HCT116 (cell line): ENCODE measurements at regions of chr2 and their contacts with region 1.

Region 1: DNA sequence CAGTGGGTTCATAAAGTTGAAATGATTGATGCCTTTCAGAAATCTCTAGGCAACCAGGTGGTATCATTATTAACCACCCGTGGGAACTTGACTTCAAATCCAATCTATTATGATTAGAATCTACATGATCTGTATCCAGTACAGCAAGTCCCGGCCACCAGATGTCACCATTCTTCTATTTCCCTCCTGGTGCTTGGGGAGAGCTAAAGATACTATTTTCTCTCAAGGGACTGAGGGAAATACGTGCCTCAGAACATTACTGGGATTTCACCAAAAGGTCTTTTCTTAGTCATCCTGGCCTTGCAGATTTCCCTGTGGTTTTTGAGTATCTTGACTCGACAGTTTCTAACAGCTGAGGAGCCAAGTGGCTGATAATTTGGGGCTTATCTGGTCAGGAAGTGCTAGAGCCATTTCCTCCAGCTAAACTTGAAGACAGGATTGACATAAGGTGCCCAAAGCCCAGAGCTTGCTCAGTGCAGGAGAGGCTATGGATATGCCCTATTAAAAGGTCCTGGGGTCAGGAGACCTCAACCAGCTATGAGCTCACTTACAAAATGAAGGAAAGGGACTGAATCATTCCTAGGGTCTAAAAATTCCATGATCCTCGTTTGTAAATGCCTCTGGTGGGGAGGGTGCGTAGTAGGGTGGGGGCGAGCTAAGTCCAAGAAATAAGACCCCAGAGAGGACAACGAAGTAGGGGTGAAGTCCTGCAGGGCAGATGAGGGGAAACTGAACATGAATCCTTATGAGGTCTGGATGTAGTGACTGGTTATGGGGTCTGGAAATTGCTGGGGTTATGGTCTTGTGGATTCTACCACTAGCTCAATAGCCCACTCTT is 135.4 kb upstream of the MGAT5 start:
- DNase-seq: peak; percentile 84
- ATAC-seq: peak; percentile 52
- H3K4me3 ChIP-seq: peak overlapping the region in 1 of 2 experiments; percentile 81; a peak in 1 of 4 replicates
- H3K27ac ChIP-seq: no peak overlapping the region
- H3K4me1 ChIP-seq: peaks cover 12 to 19% of the 10 kb centered on the region in 2 experiments; a peak in 3 of 4 replicates
- H3K27me3 ChIP-seq: no peaks in the 10 kb centered on the region
- CTCF ChIP-seq: peak; percentile 68 to 97 (median 80)
- POLR2A ChIP-seq: no peak
- RAD21 ChIP-seq: peak; percentile 98

Region 2: GRCh38 chr2:133886735-133887660 is 231.5 kb before region 1 on chr2:
- CTCF ChIA-PET with region 1: interaction called, 18 read pairs
- POLR2A ChIA-PET with region 1: no interaction called
- RAD21 ChIA-PET with region 1: interaction called, 3 to 4 read pairs
- intact Hi-C with region 1: loop called (anchors 2 kb)
- DNase-seq: peak; percentile 70
- ATAC-seq: peak; percentile 94
- H3K4me3 ChIP-seq: no peak overlapping the region
- H3K27ac ChIP-seq: no peak overlapping the region
- H3K4me1 ChIP-seq: no peaks in the 10 kb centered on the region
- H3K27me3 ChIP-seq: no peaks in the 10 kb centered on the region
- CTCF ChIP-seq: peak; percentile 61 to 76 (median 71)
- POLR2A ChIP-seq: no peak
- RAD21 ChIP-seq: peak; percentile 82

Region 3: GRCh38 chr2:134207564-134208209 is 89.2 kb after region 1 on chr2:
- CTCF ChIA-PET with region 1: interaction called, 43 read pairs
- POLR2A ChIA-PET with region 1: interaction called, 3 read pairs
- RAD21 ChIA-PET with region 1: interaction called, 10 to 23 read pairs
- intact Hi-C with region 1: loop called (anchors 5 kb)
- DNase-seq: peak; percentile 47
- ATAC-seq: peak; percentile 99
- H3K4me3 ChIP-seq: no peak overlapping the region
- H3K27ac ChIP-seq: no peak overlapping the region
- H3K4me1 ChIP-seq: no peaks in the 10 kb centered on the region
- H3K27me3 ChIP-seq: no peaks in the 10 kb centered on the region
- CTCF ChIP-seq: peak; percentile 78 to 87 (median 85)
- POLR2A ChIP-seq: no peak
- RAD21 ChIP-seq: peak; percentile 86

Region 4: GRCh38 chr2:134245340-134245984 is 127.0 kb after region 1 on chr2:
- CTCF ChIA-PET with region 1: interaction called, 27 read pairs
- POLR2A ChIA-PET with region 1: no interaction called
- RAD21 ChIA-PET with region 1: interaction called in 1 of 2 experiments, 6 read pairs
- intact Hi-C with region 1: loop called (anchors 1 kb)
- DNase-seq: peak; percentile 35
- ATAC-seq: peak; percentile 81
- H3K4me3 ChIP-seq: no peak overlapping the region
- H3K27ac ChIP-seq: no peak overlapping the region
- H3K4me1 ChIP-seq: no peaks in the 10 kb centered on the region
- H3K27me3 ChIP-seq: no peaks in the 10 kb centered on the region
- CTCF ChIP-seq: peak; percentile 62 to 87 (median 83)
- POLR2A ChIP-seq: no peak
- RAD21 ChIP-seq: peak; percentile 71

Region 5: DNA sequence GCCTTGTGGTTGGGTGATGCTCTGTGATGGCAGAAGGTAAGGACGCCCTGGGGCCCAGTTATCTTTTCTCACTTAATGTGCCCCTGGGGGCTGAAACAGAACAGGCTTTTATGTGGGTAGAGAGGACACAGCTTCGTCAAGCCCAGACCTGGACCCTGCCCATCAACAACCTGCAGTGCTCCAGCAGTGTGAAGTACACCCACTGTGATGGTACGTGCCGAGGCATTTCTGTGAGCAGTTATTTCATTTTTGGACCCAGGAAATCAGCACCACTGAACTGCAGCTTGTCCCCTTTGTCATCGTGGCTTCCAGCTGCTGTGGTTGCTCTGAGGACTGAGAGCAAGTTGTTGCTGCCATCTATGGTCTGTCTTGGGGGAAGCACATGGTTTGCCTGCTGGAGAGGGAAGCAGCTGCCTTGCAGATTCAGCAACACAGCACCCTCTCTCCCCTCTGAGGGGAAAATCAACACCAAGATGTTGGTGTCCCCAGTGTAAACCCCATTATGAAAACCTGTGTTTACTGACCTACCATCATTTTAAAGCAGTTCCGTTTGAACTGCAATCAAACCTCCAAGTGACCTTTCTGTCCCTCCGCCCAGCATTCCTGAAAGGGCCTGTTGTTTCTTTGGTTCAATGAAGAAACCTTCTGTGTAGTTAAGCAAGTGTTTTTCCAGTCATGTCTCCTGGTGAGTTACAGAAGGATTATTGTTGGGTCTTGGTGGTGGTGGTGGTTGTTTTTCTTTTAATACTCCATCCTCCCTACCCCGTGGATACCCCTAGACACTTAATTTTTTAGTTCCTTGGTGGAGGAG is 293.5 kb after region 1 on chr2:
- CTCF ChIA-PET with region 1: interaction called, 60 read pairs
- POLR2A ChIA-PET with region 1: interaction called, 5 read pairs
- RAD21 ChIA-PET with region 1: interaction called, 7 to 11 read pairs
- intact Hi-C with region 1: loop called (anchors 1 kb)
- DNase-seq: peak; percentile 44
- ATAC-seq: peak; percentile 95
- H3K4me3 ChIP-seq: no peak overlapping the region
- H3K27ac ChIP-seq: no peak overlapping the region
- H3K4me1 ChIP-seq: peaks cover 5% of the 10 kb centered on the region in 2 experiments; a peak in 1 of 4 replicates
- H3K27me3 ChIP-seq: no peaks in the 10 kb centered on the region
- CTCF ChIP-seq: peak; percentile 50 to 68 (median 56); a peak in 5 of 6 replicates
- POLR2A ChIP-seq: no peak
- RAD21 ChIP-seq: peak; percentile 81

Region 6: DNA sequence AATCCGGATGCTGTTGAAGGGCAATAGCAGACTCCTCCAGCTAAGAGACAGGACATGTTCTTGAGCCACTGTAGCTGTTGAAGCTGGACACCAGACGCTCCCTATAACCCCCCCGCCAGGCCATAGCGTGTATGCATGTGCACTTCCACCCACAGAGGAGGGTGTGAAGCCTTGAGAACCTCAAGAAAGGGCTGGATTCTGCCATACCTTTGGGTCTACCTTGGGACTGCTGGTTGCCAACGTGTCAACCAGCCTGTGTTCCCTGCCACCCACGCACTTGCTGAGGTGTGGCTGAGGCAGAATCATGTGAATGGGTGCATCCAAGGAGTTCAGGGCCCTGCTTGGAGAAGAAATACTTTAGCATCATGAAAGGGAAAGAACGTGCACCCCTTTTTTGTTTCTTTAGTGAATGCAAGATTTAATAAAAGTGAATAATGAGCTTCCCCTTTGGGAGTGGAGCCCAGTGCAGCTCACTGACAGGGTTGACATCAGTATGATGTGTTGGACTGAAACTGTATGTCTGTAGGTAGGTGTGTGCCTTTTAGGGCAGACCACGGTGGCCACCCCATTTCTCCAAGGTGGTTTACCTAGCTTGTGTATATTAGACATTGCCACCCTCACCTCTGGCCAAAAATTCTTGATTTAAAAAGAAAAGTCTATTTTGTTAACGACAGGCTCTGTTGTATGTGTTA is 333.7 kb after region 1 on chr2:
- CTCF ChIA-PET with region 1: interaction called, 43 read pairs
- POLR2A ChIA-PET with region 1: no interaction called
- RAD21 ChIA-PET with region 1: interaction called in 1 of 2 experiments, 7 read pairs
- intact Hi-C with region 1: loop called (anchors 1 kb)
- DNase-seq: no peak
- ATAC-seq: no peak
- H3K4me3 ChIP-seq: no peak overlapping the region
- H3K27ac ChIP-seq: no peak overlapping the region
- H3K4me1 ChIP-seq: no peaks in the 10 kb centered on the region
- H3K27me3 ChIP-seq: no peaks in the 10 kb centered on the region
- CTCF ChIP-seq: no peak
- POLR2A ChIP-seq: no peak
- RAD21 ChIP-seq: no peak